Dorsolateral prefrontal cortex (tissue), 120 donors: ENCODE measurements at regions of chr6 and their contacts with region 1.

Region 1: DNA sequence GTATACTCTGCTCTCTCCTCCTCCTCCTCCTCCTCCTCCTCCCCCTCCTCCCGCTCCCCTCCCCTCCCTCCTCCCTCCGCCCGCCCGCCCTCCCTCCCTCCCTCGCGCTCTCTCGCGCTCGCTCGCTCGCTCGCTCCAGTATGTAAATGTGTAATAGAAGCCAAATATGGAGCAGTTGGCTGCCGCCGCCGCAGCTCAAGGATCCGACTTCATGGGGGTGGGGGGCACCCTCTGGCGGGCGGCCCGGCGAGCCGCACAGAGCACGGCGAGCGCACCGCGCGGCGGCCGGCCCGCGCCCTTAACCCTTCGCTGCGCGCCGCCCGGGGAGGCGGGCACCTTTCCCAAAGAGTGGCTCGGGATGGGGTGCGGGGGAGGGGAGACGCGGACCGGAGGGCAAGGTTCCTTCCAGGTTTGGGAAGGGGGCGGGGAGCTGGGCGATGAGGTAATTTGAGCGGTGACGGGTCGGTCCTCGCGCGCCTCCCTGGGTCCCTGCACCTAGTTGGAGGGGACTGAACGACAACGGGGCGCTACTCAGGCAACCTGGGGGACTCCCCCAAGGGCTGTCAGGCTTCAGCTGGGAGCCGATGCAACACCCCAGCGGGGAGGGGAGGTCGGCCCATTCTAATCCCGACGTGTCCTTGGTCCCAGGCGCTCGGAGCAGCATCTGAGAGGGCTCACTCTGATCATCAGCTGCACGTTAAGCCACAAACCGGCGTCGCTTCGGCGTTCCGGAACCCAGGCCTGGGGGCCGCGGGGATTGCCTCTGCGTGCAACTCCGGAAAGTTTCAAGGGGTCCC is 409 bp upstream of the ATXN1 start:
- DNase-seq: peak; percentile 66 to 88 (median 82)
- H3K4me3 ChIP-seq: peak overlapping the region; percentile 48 to 97 (median 84)
- H3K27ac ChIP-seq: peak overlapping the region; percentile 70 to 99 (median 97)
- H3K27me3 ChIP-seq: no peaks in the 10 kb centered on the region
- CTCF ChIP-seq: peak in 30 of 56 donors; percentile 6 to 50 (median 26)

Region 2: GRCh38 chr6:16409531-16410441 is 351.9 kb before region 1 on chr6:
- intact Hi-C with region 1: loop called (anchors 5 kb)
- DNase-seq: peak; percentile 39 to 78 (median 64)
- H3K4me3 ChIP-seq: peak overlapping the region in 4 of 59 donors; percentile 5 to 24 (median 18)
- H3K27ac ChIP-seq: peak overlapping the region in 21 of 59 donors; percentile 1 to 53 (median 24)
- H3K27me3 ChIP-seq: no peaks in the 10 kb centered on the region
- CTCF ChIP-seq: peak; percentile 39 to 87 (median 78)

Region 3: GRCh38 chr6:16514249-16514648 is 247.4 kb before region 1 on chr6:
- intact Hi-C with region 1: loop called (anchors 2 to 5 kb)
- DNase-seq: peak in 3 of 10 donors; percentile 5 to 48 (median 41)
- H3K4me3 ChIP-seq: peak overlapping the region in 46 of 59 donors; percentile 4 to 56 (median 31)
- H3K27ac ChIP-seq: peak overlapping the region in 57 of 59 donors; percentile 2 to 87 (median 68)
- H3K27me3 ChIP-seq: no peaks in the 10 kb centered on the region
- CTCF ChIP-seq: peak; percentile 26 to 76 (median 64)

Region 4: DNA sequence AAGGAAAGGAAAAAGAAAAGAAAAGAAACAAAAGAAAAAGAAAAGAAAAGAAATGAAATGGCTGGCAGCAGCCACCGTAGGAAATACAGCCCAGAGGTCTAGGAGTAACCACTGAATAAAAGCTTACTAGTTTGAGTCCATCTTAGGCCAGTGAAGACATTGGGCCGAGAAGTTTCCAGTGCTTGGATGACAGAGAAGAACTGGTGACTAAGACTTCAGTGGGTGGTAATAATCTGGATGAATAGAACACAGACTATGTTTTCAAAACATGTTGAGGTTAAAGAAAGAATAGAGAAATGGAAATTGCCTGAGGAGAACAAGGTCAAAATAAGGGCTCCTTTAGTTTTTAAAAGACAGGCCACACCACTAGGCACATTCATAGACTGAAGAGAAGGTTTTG is 199.2 kb before region 1 on chr6:
- intact Hi-C with region 1: loop called (anchors 5 kb)
- DNase-seq: no peak
- H3K4me3 ChIP-seq: no peak overlapping the region
- H3K27ac ChIP-seq: peak overlapping the region in 39 of 59 donors; percentile 12 to 99 (median 52)
- H3K27me3 ChIP-seq: no peaks in the 10 kb centered on the region
- CTCF ChIP-seq: no peak

Region 5: GRCh38 chr6:16717275-16717942 is 44.3 kb before region 1 on chr6:
- intact Hi-C with region 1: loop called (anchors 5 kb)
- DNase-seq: peak in 1 of 10 donors; percentile 57
- H3K4me3 ChIP-seq: peak overlapping the region in 1 of 59 donors; percentile 3
- H3K27ac ChIP-seq: peak overlapping the region in 34 of 59 donors; percentile 2 to 66 (median 42)
- H3K27me3 ChIP-seq: no peaks in the 10 kb centered on the region
- CTCF ChIP-seq: no peak

Region 6: GRCh38 chr6:16723826-16724225 is 37.8 kb before region 1 on chr6:
- intact Hi-C with region 1: loop called (anchors 5 kb)
- DNase-seq: no peak
- H3K4me3 ChIP-seq: no peak overlapping the region
- H3K27ac ChIP-seq: no peak overlapping the region
- H3K27me3 ChIP-seq: no peaks in the 10 kb centered on the region
- CTCF ChIP-seq: no peak